ENCODE measurements at regions of chr6 and their contacts with region 1.

Region 1: DNA sequence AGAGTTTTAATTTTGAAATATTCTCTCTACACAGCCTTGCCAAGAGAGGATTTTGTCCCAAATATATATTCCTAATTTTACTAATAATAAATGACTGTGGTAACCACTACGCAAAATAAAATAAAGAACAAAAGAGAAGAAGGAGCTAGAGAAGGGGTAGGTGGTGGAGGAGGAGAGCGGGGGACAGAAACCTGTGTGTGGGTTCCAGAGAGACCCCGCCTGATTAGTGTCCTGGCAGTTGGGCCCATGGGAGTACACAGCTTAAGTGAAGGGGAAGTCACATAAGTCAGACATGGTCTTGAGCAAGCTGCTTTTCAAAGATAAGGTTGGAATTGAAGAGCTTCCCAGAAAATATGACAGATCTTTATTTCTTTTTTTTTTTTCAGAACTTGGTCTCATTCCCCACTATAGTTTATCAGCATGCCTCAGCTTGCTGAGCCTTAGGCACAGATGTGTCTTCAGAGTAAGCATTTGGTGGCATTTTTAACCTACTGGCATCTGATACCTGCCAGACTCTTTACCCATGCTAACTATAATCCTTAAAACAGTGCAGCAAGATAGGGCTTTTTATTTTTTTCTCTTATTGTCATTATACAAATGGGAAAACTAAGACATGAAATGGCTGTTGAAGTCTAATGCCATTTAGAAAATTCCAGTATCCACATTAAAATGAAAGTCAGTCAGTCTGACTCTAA is 9.6 kb upstream of the RHAG start:
- DNase-seq: peak; percentile 89 to 97 (median 92)
- ATAC-seq: peak; percentile 92
- H3K4me3 ChIP-seq: no peak overlapping the region
- H3K27ac ChIP-seq: peak overlapping the region; percentile 79
- H3K4me1 ChIP-seq: peaks cover 3 to 29% of the 10 kb centered on the region in 2 experiments; a peak in 3 of 5 replicates
- H3K27me3 ChIP-seq: no peaks in the 10 kb centered on the region
- CTCF ChIP-seq: no peak
- EP300 ChIP-seq: peak; percentile 100
- POLR2A ChIP-seq: no peak; the same call in 1 of the 2 replicates
- RAD21 ChIP-seq: peak; percentile 32 to 35; a peak in 3 of 4 replicates

Region 2: GRCh38 chr6:49666930-49667757 is 20.9 kb after region 1 on chr6:
- CTCF ChIA-PET with region 1: no interaction called
- POLR2A ChIA-PET with region 1: interaction called, 3 read pairs
- in situ Hi-C with region 1: no loop called
- intact Hi-C with region 1: loop called (anchors 1 kb)
- DNase-seq: peak; percentile 32 to 75 (median 52)
- ATAC-seq: peak; percentile 86
- H3K4me3 ChIP-seq: no peak overlapping the region
- H3K27ac ChIP-seq: peak overlapping the region; percentile 34
- H3K4me1 ChIP-seq: peaks cover 8 to 28% of the 10 kb centered on the region in 2 experiments; a peak in 4 of 5 replicates
- H3K27me3 ChIP-seq: no peaks in the 10 kb centered on the region
- CTCF ChIP-seq: no peak
- EP300 ChIP-seq: peak; percentile 87
- POLR2A ChIP-seq: no peak
- RAD21 ChIP-seq: no peak

Region 3: DNA sequence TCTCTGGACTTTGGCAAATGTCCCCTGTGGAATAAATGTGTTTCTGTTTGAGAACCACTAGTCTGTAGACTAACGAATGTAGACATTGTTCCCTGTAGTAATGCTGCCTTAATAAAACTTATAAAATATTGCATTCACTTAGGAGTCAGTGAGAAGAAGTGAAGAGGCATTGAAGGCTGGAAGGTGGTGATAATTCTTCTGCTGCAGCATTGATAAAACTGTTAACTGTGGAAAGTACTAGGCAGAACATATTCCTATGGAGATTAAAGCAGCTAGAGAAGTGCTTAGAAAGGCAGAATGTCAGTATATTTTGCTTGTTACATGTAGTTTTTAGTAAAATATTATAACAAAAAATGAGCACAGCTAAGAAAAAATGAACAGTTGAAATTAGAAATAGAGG is 136.0 kb after region 1 on chr6:
- CTCF ChIA-PET with region 1: no interaction called
- POLR2A ChIA-PET with region 1: interaction called, 3 read pairs
- in situ Hi-C with region 1: no loop called
- intact Hi-C with region 1: loop called (anchors 5 kb)
- DNase-seq: peak in 2 of 4 experiments; percentile 68 to 75
- ATAC-seq: peak; percentile 81
- H3K4me3 ChIP-seq: no peak overlapping the region; the same call in 1 of the 2 replicates
- H3K27ac ChIP-seq: peak overlapping the region; percentile 80
- H3K4me1 ChIP-seq: peaks cover 7 to 25% of the 10 kb centered on the region in 2 experiments; a peak in 4 of 5 replicates
- H3K27me3 ChIP-seq: no peaks in the 10 kb centered on the region
- CTCF ChIP-seq: no peak
- EP300 ChIP-seq: peak; percentile 82; the same call in 1 of the 2 replicates
- POLR2A ChIP-seq: no peak
- RAD21 ChIP-seq: no peak